Natural killer cell (primary cell): ENCODE measurements at regions of chr1 and their contacts with region 1.

Region 1: GRCh38 chr1:27940297-27940696 is 5.5 kb downstream of the SMPDL3B start:
- DNase-seq: peak; percentile 63 to 85
- ATAC-seq: peak; percentile 77 to 83 (median 81)
- H3K4me3 ChIP-seq: no peak overlapping the region
- H3K4me3 Mint-ChIP-seq: no peak overlapping the region
- H3K27ac ChIP-seq: peak overlapping the region; percentile 6
- H3K27ac Mint-ChIP-seq: peak overlapping the region; percentile 93
- H3K4me1 ChIP-seq: peaks cover 34% of the 10 kb centered on the region
- H3K4me1 Mint-ChIP-seq: peaks cover 24 to 35% of the 10 kb centered on the region in 2 donors
- H3K27me3 ChIP-seq: no peaks in the 10 kb centered on the region
- H3K27me3 Mint-ChIP-seq: peaks cover 4 to 8% of the 10 kb centered on the region in 2 donors
- CTCF ChIP-seq: peak; percentile 75

Region 2: DNA sequence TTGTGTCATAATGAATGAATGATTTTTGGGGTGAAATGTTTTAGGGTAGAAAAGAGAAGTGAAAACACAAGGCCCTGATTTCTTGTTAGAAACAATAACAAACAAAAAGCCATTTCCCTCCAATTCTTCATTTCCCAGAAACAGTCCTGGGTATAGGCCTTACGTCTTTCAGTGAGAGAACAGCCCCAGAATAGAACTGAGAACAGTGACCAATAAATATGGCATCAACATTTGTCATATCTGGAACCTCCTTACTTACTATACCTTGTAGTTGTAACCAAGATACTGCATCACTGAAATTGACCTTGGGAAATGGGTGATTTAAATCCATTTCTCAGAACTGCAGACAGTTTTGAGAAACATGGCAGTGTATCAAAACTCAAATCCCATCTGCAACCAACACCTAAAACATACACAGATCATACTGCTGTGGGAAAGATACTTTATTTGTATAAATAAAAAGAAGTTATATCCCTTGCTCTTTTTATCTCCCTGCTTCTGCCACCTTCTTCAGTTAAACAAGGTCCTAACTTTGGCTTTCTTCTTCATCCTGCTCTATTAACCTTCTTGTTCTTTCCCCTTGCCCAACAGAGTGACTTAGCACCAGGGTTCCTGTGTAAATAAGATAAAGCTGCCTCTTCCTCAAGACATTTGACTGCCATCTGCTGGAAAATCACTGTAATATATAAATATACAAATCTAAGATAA is 39.0 kb after region 1 on chr1:
- intact Hi-C with region 1: loop called (anchors 1 kb)
- DNase-seq: peak in 1 of 2 donors; percentile 75
- ATAC-seq: peak; percentile 65 to 86 (median 79)
- H3K4me3 ChIP-seq: no peak overlapping the region
- H3K4me3 Mint-ChIP-seq: no peak overlapping the region
- H3K27ac ChIP-seq: no peak overlapping the region
- H3K27ac Mint-ChIP-seq: no peak overlapping the region
- H3K4me1 ChIP-seq: no peaks in the 10 kb centered on the region
- H3K4me1 Mint-ChIP-seq: no peaks in the 10 kb centered on the region
- H3K27me3 ChIP-seq: no peaks in the 10 kb centered on the region
- H3K27me3 Mint-ChIP-seq: no peaks in the 10 kb centered on the region
- CTCF ChIP-seq: peak; percentile 58

Region 3: GRCh38 chr1:28208818-28209441 is 268.6 kb after region 1 on chr1:
- intact Hi-C with region 1: loop called (anchors 5 kb)
- DNase-seq: peak; percentile 45 to 80
- ATAC-seq: peak; percentile 86 to 98 (median 92)
- H3K4me3 ChIP-seq: no peak overlapping the region
- H3K4me3 Mint-ChIP-seq: no peak overlapping the region
- H3K27ac ChIP-seq: no peak overlapping the region
- H3K27ac Mint-ChIP-seq: peak overlapping the region; percentile 24 to 36
- H3K4me1 ChIP-seq: no peaks in the 10 kb centered on the region
- H3K4me1 Mint-ChIP-seq: peaks cover 10 to 13% of the 10 kb centered on the region in 2 donors
- H3K27me3 ChIP-seq: no peaks in the 10 kb centered on the region
- H3K27me3 Mint-ChIP-seq: no peaks in the 10 kb centered on the region
- CTCF ChIP-seq: peak; percentile 78